PC-9 (cell line): ENCODE measurements at regions of chr1 and their contacts with region 1.

Region 1: GRCh38 chr1:50593515-50593914 is 170.3 kb upstream of the DMRTA2 start:
- DNase-seq: no peak
- H3K4me3 ChIP-seq: no peak overlapping the region
- H3K27ac ChIP-seq: no peak overlapping the region
- H3K4me1 ChIP-seq: no peaks in the 10 kb centered on the region
- H3K27me3 ChIP-seq: no peaks in the 10 kb centered on the region
- CTCF ChIP-seq: no peak

Region 2: GRCh38 chr1:50644447-50645105 is 51.1 kb after region 1 on chr1:
- CTCF ChIA-PET with region 1: no interaction called
- POLR2A ChIA-PET with region 1: no interaction called
- intact Hi-C with region 1: loop called (anchors 1 kb)
- DNase-seq: no peak
- H3K4me3 ChIP-seq: no peak overlapping the region
- H3K27ac ChIP-seq: no peak overlapping the region
- H3K4me1 ChIP-seq: no peaks in the 10 kb centered on the region
- H3K27me3 ChIP-seq: no peaks in the 10 kb centered on the region
- CTCF ChIP-seq: no peak